A549 (cell line): ENCODE measurements at regions of chr10 and their contacts with region 1.

Region 1: GRCh38 chr10:32271617-32272016 is 75.3 kb downstream of the EPC1 start:
- DNase-seq: no peak
- ATAC-seq: no peak
- H3K4me3 ChIP-seq: no peak overlapping the region
- H3K27ac ChIP-seq: no peak overlapping the region
- H3K4me1 ChIP-seq: no peaks in the 10 kb centered on the region
- CTCF ChIP-seq: no peak
- EP300 ChIP-seq: no peak
- POLR2A ChIP-seq: no peak
- RAD21 ChIP-seq: no peak

Region 2: GRCh38 chr10:32298054-32298812 is 26.6 kb after region 1 on chr10:
- CTCF ChIA-PET with region 1: interaction called, 13 read pairs
- POLR2A ChIA-PET with region 1: no interaction called
- DNase-seq: peak; percentile 68 to 78
- ATAC-seq: peak; percentile 88 to 89
- H3K4me3 ChIP-seq: no peak overlapping the region
- H3K27ac ChIP-seq: peak overlapping the region; percentile 14 to 72; a peak in 5 of 6 replicates
- H3K4me1 ChIP-seq: peaks cover 37% of the 10 kb centered on the region
- CTCF ChIP-seq: no peak
- EP300 ChIP-seq: no peak
- POLR2A ChIP-seq: no peak
- RAD21 ChIP-seq: no peak

Region 3: DNA sequence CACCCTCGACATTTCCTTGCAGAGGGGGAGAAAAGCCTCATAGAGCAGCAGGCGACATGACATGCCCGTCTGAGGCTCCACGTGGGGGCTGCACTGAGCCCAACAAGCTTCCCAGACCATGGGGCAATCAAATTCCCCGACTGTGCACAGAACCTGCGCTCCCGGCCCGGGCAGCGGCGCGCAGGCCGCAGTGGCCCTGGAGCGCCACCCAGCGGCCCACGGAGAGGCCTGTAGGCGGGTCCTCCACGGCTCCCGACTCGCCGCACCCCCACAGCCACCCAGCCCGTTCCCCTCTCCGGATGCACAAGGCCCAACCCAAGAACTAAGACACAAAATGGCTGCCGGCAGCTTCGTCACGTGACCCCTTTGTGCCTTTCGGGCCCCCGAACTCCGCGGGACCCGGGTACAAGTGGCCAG is 74.5 kb after region 1 on chr10:
- CTCF ChIA-PET with region 1: interaction called, 12 read pairs
- POLR2A ChIA-PET with region 1: no interaction called
- DNase-seq: peak; percentile 93 to 97
- ATAC-seq: peak; percentile 89 to 96
- H3K4me3 ChIP-seq: peak overlapping the region; percentile 78
- H3K27ac ChIP-seq: peak overlapping the region; percentile 99 to 100
- H3K4me1 ChIP-seq: peaks cover 56% of the 10 kb centered on the region; the same call in 2 of the 3 replicates
- CTCF ChIP-seq: peak; percentile 95
- EP300 ChIP-seq: no peak
- POLR2A ChIP-seq: no peak
- RAD21 ChIP-seq: peak; percentile 72 to 94